Motor neuron (in vitro differentiated cells): ENCODE measurements at regions of chr11 and their contacts with region 1.

Region 1: DNA sequence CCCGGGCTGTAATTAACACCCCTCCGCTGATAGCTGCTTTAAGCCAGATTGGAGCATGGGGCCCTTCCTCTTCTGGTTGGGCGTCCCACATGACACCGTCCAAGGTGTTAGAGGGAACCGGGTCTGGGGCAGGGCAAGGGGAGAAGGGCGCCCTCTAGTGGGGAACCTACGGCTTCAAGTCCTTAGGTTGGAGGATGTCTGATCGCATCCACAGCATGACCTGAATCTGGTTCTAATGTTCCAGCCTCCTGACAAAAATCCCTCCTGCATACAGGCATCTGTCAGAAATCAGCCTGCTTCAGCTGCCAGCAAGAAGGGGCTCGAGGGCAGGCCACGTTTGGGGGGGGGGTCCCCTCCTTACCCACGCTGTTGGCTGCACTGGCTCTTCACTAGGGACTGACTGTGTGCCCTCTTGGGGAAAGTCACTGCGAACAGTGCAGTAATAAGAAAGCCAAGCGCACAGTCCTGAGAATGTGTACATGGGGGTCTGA is 94.2 kb upstream of the TBCEL start:
- ATAC-seq: peak; percentile 73 to 89 (median 82)
- H3K4me3 ChIP-seq: no peak overlapping the region
- H3K27ac ChIP-seq: no peak overlapping the region
- H3K4me1 ChIP-seq: peaks cover 18 to 22% of the 10 kb centered on the region in 2 donors

Region 2: GRCh38 chr11:120696597-120697218 is 233.0 kb before region 1 on chr11:
- in situ Hi-C with region 1: loop called in 1 of 9 experiments (anchors 25 kb)
- ATAC-seq: peak in 2 of 8 experiments; percentile 75 to 89
- H3K4me3 ChIP-seq: no peak overlapping the region
- H3K27ac ChIP-seq: no peak overlapping the region
- H3K4me1 ChIP-seq: peaks cover 17 to 19% of the 10 kb centered on the region in 2 donors

Region 3: GRCh38 chr11:121112498-121113455 is 183.1 kb after region 1 on chr11:
- in situ Hi-C with region 1: loop called in 1 of 9 experiments (anchors 25 kb)
- ATAC-seq: peak; percentile 75 to 96 (median 90)
- H3K4me3 ChIP-seq: no peak overlapping the region
- H3K27ac ChIP-seq: no peak overlapping the region
- H3K4me1 ChIP-seq: peaks cover 7 to 12% of the 10 kb centered on the region in 2 donors